ENCODE measurements at regions of chr11 and their contacts with region 1.

Region 1: GRCh38 chr11:61733120-61733978 is 19.1 kb upstream of the MYRF start:
- DNase-seq: peak; percentile 18
- H3K4me3 ChIP-seq: no peak overlapping the region
- H3K27me3 ChIP-seq: no peaks in the 10 kb centered on the region
- CTCF ChIP-seq: peak; percentile 100

Region 2: GRCh38 chr11:61173456-61173855 is 559.9 kb before region 1 on chr11:
- CTCF ChIA-PET with region 1: no interaction called
- POLR2A ChIA-PET with region 1: no interaction called
- DNase-seq: no peak
- H3K4me3 ChIP-seq: no peak overlapping the region
- H3K27me3 ChIP-seq: peaks cover 10% of the 10 kb centered on the region
- CTCF ChIP-seq: peak; percentile 24

Region 3: GRCh38 chr11:61532139-61533038 is 201.0 kb before region 1 on chr11:
- CTCF ChIA-PET with region 1: no interaction called
- POLR2A ChIA-PET with region 1: no interaction called
- DNase-seq: no peak
- H3K4me3 ChIP-seq: no peak overlapping the region
- H3K27me3 ChIP-seq: peaks cover 11% of the 10 kb centered on the region
- CTCF ChIP-seq: peak; percentile 88

Region 4: DNA sequence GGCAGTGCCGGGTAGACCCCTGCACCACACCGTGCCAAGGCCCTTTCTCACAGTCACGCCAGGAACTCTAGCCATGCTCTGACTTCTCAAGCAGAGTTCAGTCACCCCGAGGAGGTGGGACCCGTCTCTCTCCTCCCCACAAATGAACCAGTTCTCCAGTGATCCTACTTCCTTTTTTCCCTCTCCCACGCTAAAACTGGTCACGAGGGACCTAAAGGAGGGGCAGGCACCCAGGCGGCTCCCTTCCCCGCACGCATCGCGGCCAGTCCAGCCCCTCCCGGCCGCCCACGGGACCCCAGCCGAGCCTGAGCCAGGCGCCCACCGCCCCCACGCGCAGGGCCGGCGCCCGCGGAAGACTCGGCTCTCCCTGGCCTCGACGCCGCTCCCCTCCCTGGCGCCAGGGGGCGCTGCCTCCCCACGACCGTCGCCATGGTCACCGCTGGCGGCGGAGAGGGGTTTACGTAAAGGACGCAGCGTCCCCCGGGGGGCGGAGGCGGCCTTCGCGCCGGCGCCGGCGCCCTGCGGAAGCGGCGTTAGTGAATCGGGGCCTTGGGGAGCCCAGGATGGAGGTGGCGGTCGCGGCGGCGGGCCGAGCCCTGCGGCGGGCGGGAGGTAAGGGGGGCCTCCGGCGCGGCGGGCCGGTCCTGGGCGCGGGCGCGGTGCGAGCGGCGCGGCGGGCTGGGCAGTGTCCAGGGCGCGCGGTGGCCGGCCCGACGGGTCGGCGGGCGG is 53.3 kb before region 1 on chr11 and contains the start of gene DAGLA:
- CTCF ChIA-PET with region 1: interaction called, 21 read pairs
- POLR2A ChIA-PET with region 1: no interaction called
- DNase-seq: no peak
- H3K4me3 ChIP-seq: peak within 1 kb of the TSS; percentile 66
- H3K27me3 ChIP-seq: peaks cover 21% of the 10 kb centered on the region
- CTCF ChIP-seq: peak; percentile 72
- polyA plus RNA-seq, gene DAGLA: 1.1 and 2.5 TPM in 2 replicates

Region 5: GRCh38 chr11:61688365-61689163 is 44.8 kb before region 1 on chr11:
- CTCF ChIA-PET with region 1: interaction called, 21 read pairs
- POLR2A ChIA-PET with region 1: no interaction called
- DNase-seq: peak; percentile 28
- H3K4me3 ChIP-seq: no peak overlapping the region
- H3K27me3 ChIP-seq: no peaks in the 10 kb centered on the region
- CTCF ChIP-seq: no peak

Region 6: DNA sequence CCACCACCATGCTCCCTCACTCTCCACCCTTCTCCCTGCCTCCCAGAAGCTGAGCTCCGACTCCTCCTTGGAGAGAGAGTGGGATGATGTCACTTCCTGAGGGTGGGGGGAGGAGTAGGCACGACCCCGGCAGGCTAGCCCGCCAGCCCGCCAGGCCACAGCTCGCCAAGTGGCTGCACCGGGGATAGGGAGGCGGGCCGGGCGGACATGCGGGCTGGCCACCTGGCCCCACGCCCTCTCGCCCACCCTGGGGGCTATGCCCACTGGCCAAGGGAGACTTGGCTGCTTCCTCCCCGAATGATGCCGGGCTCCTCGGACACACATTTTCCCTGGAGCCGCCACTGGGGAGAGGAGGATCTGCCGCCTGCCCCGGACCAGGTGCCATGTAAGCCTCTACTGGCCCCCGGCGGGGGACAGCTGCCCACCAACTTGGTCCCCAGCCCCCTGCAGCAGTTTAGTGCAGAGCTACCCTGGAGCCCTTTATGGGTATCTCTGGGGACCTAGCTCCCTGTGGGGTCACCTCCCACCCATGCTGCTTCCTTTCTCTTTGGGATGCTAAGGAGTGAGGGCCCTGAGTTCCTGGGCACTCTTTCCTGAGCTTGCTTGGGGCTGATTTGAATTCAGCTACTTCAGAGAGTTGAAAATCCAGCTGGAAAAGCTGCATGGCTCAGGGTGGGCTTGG is 14.6 kb before region 1 on chr11:
- CTCF ChIA-PET with region 1: interaction called, 33 read pairs
- POLR2A ChIA-PET with region 1: interaction called, 6 read pairs
- DNase-seq: peak; percentile 15
- H3K4me3 ChIP-seq: peak overlapping the region; percentile 54
- H3K27me3 ChIP-seq: no peaks in the 10 kb centered on the region
- CTCF ChIP-seq: no peak